Activated naive CD4-positive, alpha-beta T cell treated with anti-CD3 and anti-CD28 coated beads for 36 hours (primary cell): ENCODE measurements at regions of chr2 and their contacts with region 1.

Region 1: DNA sequence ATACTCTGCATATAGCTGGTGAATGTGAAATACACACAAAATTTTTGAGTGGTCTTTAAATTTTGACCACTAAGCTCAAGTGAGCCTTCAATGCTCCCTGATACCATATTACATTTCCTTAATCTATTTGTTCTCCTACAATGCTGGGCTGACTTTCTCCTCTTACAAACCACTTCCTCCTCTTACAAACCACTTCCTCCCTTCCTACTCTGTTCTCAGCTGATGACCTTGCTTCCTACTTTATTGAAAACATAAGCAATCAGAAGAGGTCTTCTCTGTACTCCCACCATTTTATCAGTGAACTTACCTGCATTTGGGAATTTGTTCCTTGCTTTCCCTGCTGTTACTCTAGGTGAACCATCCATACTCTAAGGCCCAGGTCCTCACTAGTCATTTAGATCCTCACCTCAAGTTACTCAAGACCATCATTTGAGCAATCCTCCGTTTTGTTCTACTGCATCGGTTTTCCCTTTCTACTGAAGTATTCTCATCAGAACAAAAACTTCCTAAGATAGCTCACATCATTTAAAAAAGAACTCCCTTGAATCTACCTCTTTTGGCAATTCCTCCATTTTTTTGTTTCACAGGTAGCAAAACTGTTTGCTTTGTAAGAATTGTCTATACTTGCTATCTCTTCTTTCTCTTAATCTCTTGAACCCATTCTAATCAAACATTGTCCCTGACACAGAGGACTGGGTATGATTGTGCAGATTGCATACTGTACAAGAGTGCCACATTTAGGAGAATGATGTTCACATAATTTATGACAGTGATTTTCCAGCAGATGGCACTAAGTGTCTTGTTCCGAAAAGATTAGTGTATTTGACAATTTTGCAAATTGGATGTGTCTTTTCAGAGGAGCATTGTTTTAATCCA is 96.5 kb downstream of the EPB41L5 start:
- DNase-seq: no peak
- H3K4me3 Mint-ChIP-seq: no peak overlapping the region
- H3K27ac Mint-ChIP-seq: peak overlapping the region; percentile 78
- H3K4me1 Mint-ChIP-seq: peaks cover 27% of the 10 kb centered on the region
- H3K27me3 Mint-ChIP-seq: no peaks in the 10 kb centered on the region

Region 2: GRCh38 chr2:119702918-119703401 is 406.5 kb before region 1 on chr2:
- CTCF ChIA-PET with region 1: no interaction called
- intact Hi-C with region 1: loop called (anchors 2 kb)
- DNase-seq: peak; percentile 74
- H3K4me3 Mint-ChIP-seq: no peak overlapping the region
- H3K27ac Mint-ChIP-seq: no peak overlapping the region
- H3K4me1 Mint-ChIP-seq: peaks cover 16% of the 10 kb centered on the region
- H3K27me3 Mint-ChIP-seq: no peaks in the 10 kb centered on the region

Region 3: GRCh38 chr2:119753041-119753929 is 356.1 kb before region 1 on chr2:
- CTCF ChIA-PET with region 1: no interaction called
- intact Hi-C with region 1: loop called (anchors 1 kb)
- DNase-seq: peak; percentile 43
- H3K4me3 Mint-ChIP-seq: no peak overlapping the region
- H3K27ac Mint-ChIP-seq: no peak overlapping the region
- H3K4me1 Mint-ChIP-seq: peaks cover 14% of the 10 kb centered on the region
- H3K27me3 Mint-ChIP-seq: no peaks in the 10 kb centered on the region

Region 4: DNA sequence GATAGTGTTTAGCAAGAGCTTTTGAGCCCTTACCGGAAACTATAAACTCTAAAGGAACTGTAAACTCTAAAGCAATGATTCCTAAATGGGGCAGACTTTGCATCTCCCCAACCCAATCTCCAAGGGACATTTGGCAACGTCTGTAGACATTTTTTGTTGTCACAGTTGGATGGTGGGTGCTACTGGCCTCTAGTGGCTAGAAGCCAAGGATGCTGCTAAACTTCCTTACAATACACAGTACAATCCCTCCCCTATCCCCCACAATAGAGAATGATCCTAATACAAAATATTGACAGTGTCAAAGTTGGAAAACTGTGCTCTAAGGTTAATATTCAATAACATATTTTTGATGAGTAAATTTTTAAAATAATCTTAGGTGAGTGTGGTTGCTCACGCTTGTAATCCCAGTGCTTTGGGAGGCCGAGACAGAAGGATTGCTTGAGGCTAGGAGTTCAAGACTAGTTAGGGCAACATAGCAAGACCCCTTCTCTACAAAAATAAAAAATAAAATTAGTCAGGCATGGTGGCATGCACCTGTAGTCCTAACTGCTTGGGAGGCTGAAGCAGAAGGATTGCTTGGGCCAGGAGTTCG is 283.0 kb before region 1 on chr2:
- CTCF ChIA-PET with region 1: no interaction called
- intact Hi-C with region 1: loop called (anchors 2 kb)
- DNase-seq: peak; percentile 58
- H3K4me3 Mint-ChIP-seq: no peak overlapping the region
- H3K27ac Mint-ChIP-seq: no peak overlapping the region
- H3K4me1 Mint-ChIP-seq: peaks cover 43% of the 10 kb centered on the region
- H3K27me3 Mint-ChIP-seq: no peaks in the 10 kb centered on the region

Region 5: GRCh38 chr2:120012771-120013596 is 96.4 kb before region 1 on chr2 and contains the start of gene EPB41L5:
- CTCF ChIA-PET with region 1: interaction called, 3 read pairs
- intact Hi-C with region 1: loop called (anchors 1 kb)
- DNase-seq: peak; percentile 79
- H3K4me3 Mint-ChIP-seq: peak within 1 kb of the TSS; percentile 77
- H3K27ac Mint-ChIP-seq: no peak within 1 kb of the TSS
- H3K4me1 Mint-ChIP-seq: peaks cover 8% of the 10 kb centered on the region
- H3K27me3 Mint-ChIP-seq: no peaks in the 10 kb centered on the region
- total RNA-seq, gene EPB41L5: 2.3 to 2.5 TPM

Region 6: GRCh38 chr2:120552800-120553481 is 443.5 kb after region 1 on chr2:
- CTCF ChIA-PET with region 1: no interaction called
- intact Hi-C with region 1: loop called (anchors 1 kb)
- DNase-seq: peak; percentile 63
- H3K4me3 Mint-ChIP-seq: no peak overlapping the region
- H3K27ac Mint-ChIP-seq: no peak overlapping the region
- H3K4me1 Mint-ChIP-seq: peaks cover 3% of the 10 kb centered on the region
- H3K27me3 Mint-ChIP-seq: peaks cover 32% of the 10 kb centered on the region